Activated naive CD4-positive, alpha-beta T cell treated with anti-CD3 and anti-CD28 coated beads for 36 hours (primary cell): ENCODE measurements at regions of chr12 and their contacts with region 1.

Region 1: DNA sequence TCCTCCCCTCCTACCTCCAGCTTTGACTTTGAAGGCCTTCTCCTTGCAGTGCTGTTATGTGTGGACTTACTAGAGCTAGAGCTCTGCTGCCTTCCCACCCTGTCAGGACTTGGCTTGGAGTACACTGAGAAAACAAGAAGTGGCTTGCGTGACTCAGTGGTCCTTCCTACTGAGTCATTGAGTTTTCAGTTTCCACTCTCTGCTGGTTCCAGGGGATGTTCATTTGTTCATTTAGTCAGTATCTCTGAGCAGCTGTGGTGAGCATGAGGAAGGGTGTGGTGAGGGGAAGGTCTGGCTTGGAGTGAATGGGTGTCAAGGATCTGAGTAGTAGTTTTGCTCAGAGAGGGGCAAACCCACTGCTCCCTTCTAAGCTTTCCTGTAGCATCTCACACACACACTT is 17.2 kb upstream of the ELK3 start:
- DNase-seq: peak; percentile 91
- H3K4me3 Mint-ChIP-seq: no peak overlapping the region
- H3K27ac Mint-ChIP-seq: peak overlapping the region; percentile 82
- H3K4me1 Mint-ChIP-seq: peaks cover 17% of the 10 kb centered on the region
- H3K27me3 Mint-ChIP-seq: no peaks in the 10 kb centered on the region

Region 2: GRCh38 chr12:96132819-96133218 is 44.2 kb before region 1 on chr12:
- CTCF ChIA-PET with region 1: no interaction called
- intact Hi-C with region 1: loop called (anchors 2 kb)
- DNase-seq: peak; percentile 27
- H3K4me3 Mint-ChIP-seq: no peak overlapping the region
- H3K27ac Mint-ChIP-seq: no peak overlapping the region
- H3K4me1 Mint-ChIP-seq: peaks cover 27% of the 10 kb centered on the region
- H3K27me3 Mint-ChIP-seq: no peaks in the 10 kb centered on the region

Region 3: DNA sequence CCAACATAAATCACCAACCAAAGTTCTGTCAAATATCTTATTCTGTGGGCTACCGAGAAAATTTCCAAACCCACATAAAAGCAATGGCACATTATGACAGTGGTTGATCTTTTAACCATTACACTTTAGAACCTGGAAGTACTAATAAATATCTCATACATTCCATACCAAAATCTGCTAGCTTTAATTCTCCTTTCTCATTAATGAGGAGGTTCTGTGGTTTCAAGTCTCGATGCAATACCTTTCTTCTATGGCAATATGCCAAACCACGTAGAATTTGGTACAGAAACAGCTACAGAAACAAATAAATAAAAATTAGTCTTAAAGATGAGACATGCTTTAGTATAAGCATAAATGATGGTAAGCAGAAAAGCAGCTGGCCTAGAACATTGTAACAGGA is 117.8 kb after region 1 on chr12:
- CTCF ChIA-PET with region 1: no interaction called
- intact Hi-C with region 1: no loop called
- DNase-seq: no peak
- H3K4me3 Mint-ChIP-seq: no peak overlapping the region
- H3K27ac Mint-ChIP-seq: no peak overlapping the region
- H3K4me1 Mint-ChIP-seq: peaks cover 26% of the 10 kb centered on the region
- H3K27me3 Mint-ChIP-seq: no peaks in the 10 kb centered on the region